Lower leg skin (tissue), 4 donors: ENCODE measurements at regions of chr3 and their contacts with region 1.

Region 1: DNA sequence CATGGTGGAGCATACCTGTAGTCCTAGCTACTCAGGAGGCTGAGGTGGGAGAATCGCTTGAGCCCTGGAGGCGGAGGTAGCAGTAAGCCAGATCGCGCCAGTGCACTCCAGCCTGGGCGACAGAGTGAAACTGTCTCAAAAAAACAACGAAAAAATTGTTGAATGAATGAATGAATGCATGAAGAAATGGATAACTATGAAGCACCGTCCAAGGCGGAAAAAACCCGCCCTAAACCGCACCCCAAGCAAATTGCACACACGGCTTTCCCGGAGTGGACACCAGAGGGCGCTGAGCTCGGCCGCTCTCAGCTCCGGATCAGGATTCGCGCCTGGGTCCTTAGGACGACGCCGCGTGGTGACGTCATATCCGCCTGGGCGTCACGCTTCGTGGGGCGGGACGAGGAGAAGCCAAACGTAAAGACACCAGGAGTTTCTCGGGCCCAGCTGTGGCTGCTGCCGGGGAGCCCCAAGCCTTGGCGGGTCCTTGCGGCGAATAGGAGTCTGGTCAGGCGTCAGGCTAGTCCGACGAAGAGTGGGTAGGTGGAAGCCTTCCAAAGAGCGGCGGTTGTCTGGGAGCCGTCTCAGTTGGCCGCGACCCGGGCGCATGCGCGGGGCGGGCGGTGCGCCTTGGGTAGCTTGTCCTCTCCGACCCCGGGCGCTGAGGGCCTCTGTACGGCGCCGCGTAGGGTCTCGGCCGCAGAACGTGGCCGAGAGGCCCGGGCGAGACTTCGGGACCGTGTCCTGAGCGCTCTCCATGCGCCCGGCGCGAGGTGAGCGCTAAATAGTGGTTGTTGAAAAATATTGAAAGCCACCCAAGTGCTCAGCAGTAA is at the starts of genes HTD2 and RPP14:
- DNase-seq: peak; percentile 98 to 100
- H3K4me3 ChIP-seq: peak within 1 kb of the TSS; percentile 68
- CTCF ChIP-seq: peak in 1 of 3 donors; percentile 90
- POLR2A ChIP-seq: no peak
- total RNA-seq, gene HTD2: 9.5 to 17.7 (median 12.7) TPM
- total RNA-seq, gene RPP14: 8.2 to 16.7 (median 9.5) TPM

Region 2: GRCh38 chr3:56960234-56960917 is 1345.7 kb before region 1 on chr3:
- intact Hi-C with region 1: loop called (anchors 5 kb)
- DNase-seq: no peak
- H3K4me3 ChIP-seq: no peak overlapping the region
- CTCF ChIP-seq: no peak
- POLR2A ChIP-seq: no peak

Region 3: DNA sequence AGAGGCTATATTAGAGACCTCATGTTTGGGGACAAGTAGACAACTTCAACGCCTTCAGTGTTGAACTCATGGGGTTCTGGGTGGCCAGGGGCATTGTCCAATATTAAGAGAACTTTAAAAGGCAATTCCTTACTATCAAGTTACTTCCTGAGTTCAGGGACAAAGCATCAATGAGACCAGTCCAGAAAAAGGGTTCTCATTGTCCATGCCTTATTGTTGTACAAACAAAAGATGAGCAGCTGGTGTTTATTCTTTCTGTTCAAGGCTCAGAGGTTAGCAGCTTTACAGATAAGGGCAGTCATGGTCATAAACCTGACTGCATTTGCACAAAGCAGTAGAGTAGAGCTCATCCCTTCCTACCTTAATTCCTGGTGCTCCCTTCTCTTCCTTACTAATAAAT is 146.1 kb after region 1 on chr3:
- intact Hi-C with region 1: no loop called
- DNase-seq: no peak
- H3K4me3 ChIP-seq: no peak overlapping the region
- CTCF ChIP-seq: no peak
- POLR2A ChIP-seq: no peak

Region 4: DNA sequence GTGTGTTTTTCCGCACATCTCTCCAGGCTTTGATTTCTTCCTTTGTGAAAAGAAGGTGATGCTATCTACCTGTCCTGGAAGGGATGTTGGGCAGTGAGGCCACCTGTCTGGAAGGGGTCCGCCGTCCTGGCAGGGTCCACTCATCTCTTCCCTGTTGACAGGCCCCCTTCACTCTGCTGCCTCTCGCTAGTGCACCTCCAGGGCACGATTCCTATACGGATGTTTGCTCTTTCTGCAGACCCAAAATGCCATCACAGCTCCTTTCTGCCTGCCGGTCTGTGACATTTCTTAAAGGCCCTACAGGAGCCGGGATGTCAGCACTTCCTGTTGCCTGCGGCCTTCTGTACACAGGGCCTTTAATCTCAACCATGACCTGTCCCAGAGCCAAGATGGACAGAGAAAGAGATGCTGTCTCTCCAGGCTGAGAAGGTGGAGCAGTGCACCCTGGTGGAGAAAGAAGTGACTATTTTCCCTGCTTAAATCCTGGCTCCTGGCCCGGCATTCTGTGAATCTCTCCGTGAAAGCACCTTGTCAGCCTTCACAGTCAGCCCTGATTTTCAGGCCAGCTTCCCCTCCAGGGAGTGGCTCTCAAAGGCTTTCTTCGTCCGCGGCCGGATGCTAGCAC is 353.1 kb after region 1 on chr3:
- intact Hi-C with region 1: no loop called
- DNase-seq: peak in 1 of 2 donors; percentile 76
- H3K4me3 ChIP-seq: no peak overlapping the region
- CTCF ChIP-seq: no peak
- POLR2A ChIP-seq: no peak